Pancreas (tissue), 10 donors: ENCODE measurements at regions of chr2 and their contacts with region 1.

Region 1: DNA sequence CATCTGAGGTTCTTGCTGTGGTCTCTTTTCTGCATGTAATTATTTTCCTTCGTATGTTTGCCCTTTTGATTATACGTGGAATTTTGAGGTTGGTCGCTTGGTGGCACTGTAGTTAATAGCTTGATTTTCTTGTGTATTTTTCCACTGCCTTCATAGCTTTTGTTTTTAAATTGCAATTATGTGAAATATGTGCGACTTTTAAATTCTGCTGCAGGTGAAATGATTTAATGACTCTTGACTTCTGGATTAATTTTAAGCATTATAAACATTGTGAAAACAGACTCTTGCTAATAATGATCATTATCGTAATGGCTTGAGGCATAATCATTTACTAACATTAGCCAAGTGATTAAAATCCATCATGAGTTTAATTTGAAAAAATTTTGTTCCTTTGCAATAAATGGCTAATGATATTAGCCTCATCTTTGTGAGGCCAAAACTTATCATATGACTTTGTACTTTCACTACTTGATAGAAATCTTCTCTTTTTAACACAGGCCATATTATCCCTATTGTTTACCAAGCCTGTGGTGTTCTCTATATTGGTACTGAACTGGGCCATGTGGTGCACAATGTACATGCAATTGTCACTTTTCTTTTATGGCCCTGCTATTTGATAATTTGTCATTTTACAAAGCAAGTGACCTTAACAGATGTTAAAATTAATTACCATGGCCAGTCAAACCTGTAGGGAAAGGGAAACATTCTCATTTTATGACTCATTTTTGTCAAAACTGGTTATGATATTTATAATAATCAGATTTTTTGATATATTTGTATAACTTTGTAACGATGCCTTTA is 62.8 kb upstream of the NEUROD1 start:
- DNase-seq: peak in 3 of 6 donors; percentile 33 to 57 (median 52)
- ATAC-seq: peak; percentile 83 to 89 (median 86)
- H3K4me3 ChIP-seq: no peak overlapping the region
- H3K27ac ChIP-seq: peak overlapping the region in 2 of 4 donors; percentile 41 to 65
- H3K4me1 ChIP-seq: peaks cover 0 to 15% (median 14%) of the 10 kb centered on the region in 3 donors
- H3K27me3 ChIP-seq: no peaks in the 10 kb centered on the region
- CTCF ChIP-seq: peak in 3 of 4 donors; percentile 29 to 35 (median 35)

Region 2: GRCh38 chr2:181790716-181791649 is 47.9 kb after region 1 on chr2:
- intact Hi-C with region 1: no loop called
- DNase-seq: no peak
- ATAC-seq: peak; percentile 78 to 85 (median 83)
- H3K4me3 ChIP-seq: no peak overlapping the region
- H3K27ac ChIP-seq: peak overlapping the region in 1 of 4 donors; percentile 51
- H3K4me1 ChIP-seq: peaks cover 0 to 11% (median 8%) of the 10 kb centered on the region in 3 donors
- H3K27me3 ChIP-seq: no peaks in the 10 kb centered on the region
- CTCF ChIP-seq: no peak

Region 3: GRCh38 chr2:181904022-181904632 is 161.0 kb after region 1 on chr2:
- intact Hi-C with region 1: loop called in 2 of 3 experiments (anchors 10 kb)
- DNase-seq: no peak
- ATAC-seq: peak; percentile 30 to 54 (median 47)
- H3K4me3 ChIP-seq: peak overlapping the region in 2 of 4 donors; percentile 25 to 32
- H3K27ac ChIP-seq: peak overlapping the region in 2 of 4 donors; percentile 100
- H3K4me1 ChIP-seq: peaks cover 11 to 37% (median 36%) of the 10 kb centered on the region in 3 donors
- H3K27me3 ChIP-seq: no peaks in the 10 kb centered on the region
- CTCF ChIP-seq: peak in 3 of 4 donors; percentile 9 to 45 (median 30)

Region 4: DNA sequence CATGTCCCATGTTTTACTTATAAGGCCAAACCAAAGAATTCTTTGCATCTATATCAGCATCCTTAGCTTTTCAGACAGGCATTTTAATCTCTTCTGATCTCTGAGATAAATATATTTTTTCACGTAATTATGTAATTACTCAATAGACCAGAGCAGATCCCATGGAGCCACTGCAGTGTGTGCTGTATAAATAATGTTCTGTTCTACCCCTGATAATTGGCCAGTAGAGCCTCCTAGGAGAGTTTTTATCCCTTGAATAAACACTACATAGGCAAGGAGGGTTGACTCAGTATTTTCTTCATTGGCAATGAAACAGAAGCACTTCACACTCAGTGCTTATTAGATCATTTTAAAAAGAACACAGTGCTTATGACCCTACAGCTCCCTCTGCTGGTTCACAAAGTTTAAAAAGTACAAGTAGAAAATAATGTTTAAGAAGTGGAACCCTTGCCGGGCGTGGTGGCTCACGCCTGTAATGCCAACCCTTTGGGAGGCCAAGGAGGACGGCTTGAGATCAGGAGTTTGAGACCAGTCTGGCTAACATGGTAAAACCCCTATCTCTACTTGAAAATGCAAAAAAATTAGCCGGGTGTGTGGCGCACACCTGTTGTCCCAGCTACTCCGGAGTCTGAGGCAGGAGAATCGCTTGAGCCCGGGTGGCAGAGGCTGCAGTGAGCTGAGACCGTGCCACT is 334.5 kb after region 1 on chr2:
- intact Hi-C with region 1: loop called in 2 of 3 experiments (anchors 5 to 10 kb)
- DNase-seq: peak in 5 of 6 donors; percentile 13 to 52 (median 35)
- ATAC-seq: peak; percentile 99
- H3K4me3 ChIP-seq: no peak overlapping the region
- H3K27ac ChIP-seq: no peak overlapping the region
- H3K4me1 ChIP-seq: peaks cover 0 to 4% (median 0%) of the 10 kb centered on the region in 3 donors
- H3K27me3 ChIP-seq: no peaks in the 10 kb centered on the region
- CTCF ChIP-seq: peak; percentile 18 to 59 (median 40)